ENCODE measurements at regions of chr19 and their contacts with region 1.

Region 1: DNA sequence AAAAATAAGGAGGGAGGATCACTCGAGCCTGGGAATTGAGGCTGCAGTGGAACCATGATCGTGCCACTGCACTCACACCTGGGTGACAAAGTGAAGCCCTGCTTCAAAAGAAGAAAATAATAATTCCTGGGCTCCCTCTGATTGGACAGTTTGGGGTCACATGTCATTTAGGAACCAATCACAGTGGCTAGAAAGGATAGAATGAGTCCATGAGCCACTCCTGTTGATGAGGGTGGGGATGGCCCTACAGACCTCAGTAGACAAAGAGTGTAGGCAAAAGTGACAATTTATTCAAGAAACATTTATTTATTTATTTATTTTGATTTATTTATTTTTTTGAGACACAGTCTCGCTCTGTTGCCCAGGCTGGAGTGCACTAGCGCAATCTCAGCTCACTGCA is 26.8 kb upstream of the ADGRE5 start:
- DNase-seq: no peak

Region 2: DNA sequence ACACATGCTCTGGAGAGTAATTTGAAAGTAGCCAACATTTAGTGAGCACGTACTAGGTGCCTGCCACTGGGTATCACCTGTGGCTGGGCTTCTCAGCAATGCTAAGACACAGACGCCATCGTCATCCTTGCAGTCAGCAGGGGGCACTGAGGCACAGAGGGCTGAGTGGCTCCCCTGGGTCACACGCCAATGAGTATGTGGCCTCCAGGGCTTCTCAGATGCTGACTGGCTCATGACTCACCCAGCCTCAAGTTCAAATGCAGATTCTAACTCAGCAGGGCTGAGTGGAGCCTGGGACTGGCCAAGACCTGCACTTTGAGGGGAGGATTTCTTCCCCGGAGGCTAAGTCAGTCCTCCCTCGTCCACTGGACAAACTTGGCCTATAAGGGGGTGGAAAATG is 733.0 kb before region 1 on chr19:
- intact Hi-C with region 1: no loop called
- DNase-seq: no peak

Region 3: DNA sequence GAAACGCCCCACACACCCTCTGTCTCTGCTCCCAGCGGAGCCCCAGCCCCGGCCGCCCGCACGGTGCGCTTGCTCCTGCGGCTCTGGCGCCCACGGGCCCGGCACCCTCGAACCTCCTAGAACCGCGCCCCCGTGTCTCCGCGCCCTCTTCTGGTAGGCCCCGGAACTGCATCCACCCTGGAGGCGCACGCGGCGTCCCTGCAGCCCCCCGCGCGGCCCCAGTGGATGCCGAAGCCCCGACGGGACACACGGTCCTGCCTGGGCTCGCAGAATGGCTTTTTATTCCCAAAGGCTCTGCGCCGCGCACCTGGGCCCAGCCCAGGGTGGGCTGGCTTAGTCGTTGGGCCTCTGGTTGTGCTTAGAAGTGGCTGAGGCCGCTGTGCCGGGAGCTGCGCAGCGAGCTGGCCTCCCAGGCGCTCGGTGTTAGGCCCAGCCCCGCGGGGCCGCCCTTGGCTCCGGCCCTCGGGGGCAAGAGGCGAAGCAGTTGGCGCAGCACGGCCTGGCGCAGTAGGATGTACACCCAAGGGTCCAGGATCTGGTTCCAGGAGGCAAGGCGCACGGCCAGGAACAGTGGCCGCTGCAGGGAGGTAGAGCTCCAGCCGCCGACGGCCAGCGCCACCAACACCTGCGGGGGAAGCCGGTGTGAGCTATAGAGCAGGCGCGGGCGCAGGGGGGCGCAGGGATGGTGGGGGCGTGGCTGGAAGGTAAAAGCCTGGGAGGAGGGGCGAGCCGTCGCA is 117.9 kb after region 1 on chr19:
- intact Hi-C with region 1: loop called in 1 of 2 experiments (anchors 10 kb)
- DNase-seq: peak; percentile 93